ENCODE measurements at regions of chr6 and their contacts with region 1.

Region 1: GRCh38 chr6:149431905-149432775 is 32.1 kb downstream of the SUMO4 start:
- DNase-seq: peak; percentile 92
- H3K4me3 Mint-ChIP-seq: no peak overlapping the region
- H3K27ac Mint-ChIP-seq: peak overlapping the region; percentile 78
- H3K4me1 Mint-ChIP-seq: peaks cover 14% of the 10 kb centered on the region
- H3K27me3 Mint-ChIP-seq: no peaks in the 10 kb centered on the region

Region 2: GRCh38 chr6:149026530-149026942 is 405.6 kb before region 1 on chr6:
- CTCF ChIA-PET with region 1: interaction called, 29 read pairs
- POLR2A ChIA-PET with region 1: no interaction called
- DNase-seq: peak; percentile 37
- H3K4me3 Mint-ChIP-seq: no peak overlapping the region
- H3K27ac Mint-ChIP-seq: no peak overlapping the region
- H3K4me1 Mint-ChIP-seq: peaks cover 30% of the 10 kb centered on the region
- H3K27me3 Mint-ChIP-seq: no peaks in the 10 kb centered on the region

Region 3: DNA sequence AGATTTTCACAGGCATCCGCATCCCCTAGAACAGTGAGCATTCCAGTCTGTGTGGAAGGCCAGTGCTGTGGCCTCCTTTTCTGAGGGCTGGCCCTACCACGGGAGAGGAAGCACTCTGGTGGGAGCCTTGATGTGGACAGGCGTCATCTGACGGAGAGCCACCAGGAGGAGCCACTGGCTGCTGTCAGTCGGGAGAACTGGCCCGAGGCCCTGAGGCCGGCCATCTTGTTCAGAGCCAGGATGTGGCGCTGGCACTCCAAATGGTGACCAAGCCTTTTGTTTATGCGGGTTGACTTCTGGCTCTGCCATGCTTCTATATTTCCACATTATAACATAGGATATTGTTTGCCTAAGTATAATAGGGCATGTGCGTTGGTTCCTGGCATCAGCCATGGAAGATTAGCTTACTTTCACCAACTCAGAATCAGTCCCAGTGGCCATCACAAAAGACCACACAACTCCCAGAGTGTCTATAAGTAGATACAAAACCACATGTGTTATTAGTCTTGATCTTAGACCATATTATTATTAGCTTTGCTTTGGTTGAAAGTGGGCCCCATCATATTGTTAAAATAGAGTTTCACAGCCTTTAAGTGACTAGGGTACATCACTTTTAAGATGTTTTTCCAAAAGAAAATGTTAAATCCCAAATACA is 388.5 kb before region 1 on chr6:
- CTCF ChIA-PET with region 1: interaction called, 15 read pairs
- POLR2A ChIA-PET with region 1: no interaction called
- DNase-seq: peak; percentile 22
- H3K4me3 Mint-ChIP-seq: no peak overlapping the region
- H3K27ac Mint-ChIP-seq: no peak overlapping the region
- H3K4me1 Mint-ChIP-seq: peaks cover 54% of the 10 kb centered on the region
- H3K27me3 Mint-ChIP-seq: no peaks in the 10 kb centered on the region

Region 4: GRCh38 chr6:149082286-149082707 is 349.8 kb before region 1 on chr6:
- CTCF ChIA-PET with region 1: interaction called, 11 read pairs
- POLR2A ChIA-PET with region 1: interaction called, 5 read pairs
- DNase-seq: peak; percentile 94
- H3K4me3 Mint-ChIP-seq: no peak overlapping the region
- H3K27ac Mint-ChIP-seq: peak overlapping the region; percentile 90
- H3K4me1 Mint-ChIP-seq: peaks cover 84% of the 10 kb centered on the region
- H3K27me3 Mint-ChIP-seq: no peaks in the 10 kb centered on the region

Region 5: DNA sequence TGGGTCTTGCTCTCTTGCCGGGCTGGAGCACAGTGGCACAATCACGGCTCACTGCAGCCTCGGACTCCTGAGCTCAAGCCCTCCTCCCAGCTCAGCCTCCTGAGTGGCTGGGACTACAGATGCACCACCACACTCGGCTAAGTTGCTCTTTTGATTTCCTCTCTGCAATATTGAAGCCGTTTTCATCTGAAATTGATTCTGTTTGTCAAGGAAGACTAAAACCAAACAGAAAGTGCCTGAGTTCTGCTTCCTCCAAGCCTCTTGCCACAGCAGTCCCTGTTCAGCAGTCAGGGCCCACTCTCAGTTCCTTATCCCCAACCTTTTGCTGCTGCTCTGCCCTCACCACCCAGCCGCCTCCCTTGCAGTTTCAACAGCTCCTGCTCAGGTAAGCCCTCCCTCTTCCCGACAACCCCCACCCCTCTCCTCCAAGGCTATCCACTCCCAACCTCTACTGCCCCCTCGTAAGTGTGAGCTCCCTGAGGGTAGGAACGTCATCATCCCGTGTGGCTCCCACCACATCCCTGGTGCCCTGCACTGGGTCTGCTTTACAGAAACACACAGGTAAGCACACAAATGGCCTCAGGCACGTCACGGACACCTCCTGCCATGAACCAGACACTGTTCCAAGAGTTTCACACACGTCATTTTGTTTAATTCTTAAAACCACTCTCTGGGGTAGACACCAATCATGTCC is 185.3 kb before region 1 on chr6:
- CTCF ChIA-PET with region 1: no interaction called
- POLR2A ChIA-PET with region 1: no interaction called
- DNase-seq: no peak
- H3K4me3 Mint-ChIP-seq: no peak overlapping the region
- H3K27ac Mint-ChIP-seq: peak overlapping the region; percentile 80
- H3K4me1 Mint-ChIP-seq: peaks cover 47% of the 10 kb centered on the region
- H3K27me3 Mint-ChIP-seq: no peaks in the 10 kb centered on the region

Region 6: DNA sequence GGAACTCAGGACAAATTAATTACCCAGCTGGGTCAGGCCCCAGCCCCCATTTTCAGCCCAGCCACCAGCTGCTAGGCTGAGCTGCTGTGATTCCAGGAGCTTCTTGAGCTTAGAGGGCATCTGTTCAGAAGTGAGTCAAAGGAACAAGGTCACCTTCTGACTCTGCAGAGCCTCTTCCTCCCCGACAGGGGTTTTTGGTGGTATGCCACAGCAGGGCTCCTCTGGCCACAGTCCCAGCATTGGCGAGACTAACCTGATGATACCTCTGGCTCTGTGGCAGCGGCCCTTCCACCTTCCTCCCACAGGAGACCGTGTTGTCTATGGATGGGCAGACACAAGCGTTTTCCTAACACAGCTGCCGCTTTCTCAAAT is 12.9 kb after region 1 on chr6:
- CTCF ChIA-PET with region 1: interaction called, 11 read pairs
- POLR2A ChIA-PET with region 1: no interaction called
- DNase-seq: no peak
- H3K4me3 Mint-ChIP-seq: no peak overlapping the region
- H3K27ac Mint-ChIP-seq: no peak overlapping the region
- H3K4me1 Mint-ChIP-seq: no peaks in the 10 kb centered on the region
- H3K27me3 Mint-ChIP-seq: no peaks in the 10 kb centered on the region